ENCODE measurements at regions of chr5 and their contacts with region 1.

Region 1: DNA sequence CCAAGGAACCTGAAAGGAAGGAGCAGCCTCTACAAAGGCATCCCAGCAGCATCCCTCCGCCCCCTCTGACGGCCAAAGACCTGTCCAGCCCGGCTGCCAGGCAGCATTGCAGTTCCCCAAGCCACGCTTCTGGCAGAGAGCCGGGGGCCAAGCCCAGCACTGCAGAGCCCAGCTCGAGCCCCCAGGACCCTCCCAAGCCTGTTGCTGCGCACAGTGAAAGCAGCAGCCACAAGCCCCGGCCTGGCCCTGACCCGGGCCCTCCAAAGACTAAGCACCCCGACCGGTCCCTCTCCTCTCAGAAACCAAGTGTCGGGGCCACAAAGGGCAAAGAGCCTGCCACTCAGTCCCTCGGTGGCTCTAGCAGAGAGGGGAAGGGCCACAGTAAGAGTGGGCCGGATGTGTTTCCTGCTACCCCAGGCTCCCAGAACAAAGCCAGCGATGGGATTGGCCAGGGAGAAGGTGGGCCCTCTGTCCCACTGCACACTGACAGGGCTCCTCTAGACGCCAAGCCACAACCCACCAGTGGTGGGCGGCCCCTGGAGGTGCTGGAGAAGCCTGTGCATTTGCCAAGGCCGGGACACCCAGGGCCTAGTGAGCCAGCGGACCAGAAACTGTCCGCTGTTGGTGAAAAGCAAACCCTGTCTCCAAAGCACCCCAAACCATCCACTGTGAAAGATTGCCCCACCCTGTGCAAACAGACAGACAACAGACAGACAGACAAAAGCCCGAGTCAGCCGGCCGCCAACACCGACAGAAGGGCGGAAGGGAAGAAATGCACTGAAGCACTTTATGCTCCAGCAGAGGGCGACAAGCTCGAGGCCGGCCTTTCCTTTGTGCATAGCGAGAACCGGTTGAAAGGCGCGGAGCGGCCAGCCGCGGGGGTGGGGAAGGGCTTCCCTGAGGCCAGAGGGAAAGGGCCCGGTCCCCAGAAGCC is 30.8 kb downstream of the CD180 start:
- DNase-seq: peak; percentile 86 to 90
- ATAC-seq: peak; percentile 56 to 93 (median 82)
- H3K4me3 ChIP-seq: peak overlapping the region; percentile 46
- H3K27ac ChIP-seq: peak overlapping the region; percentile 61
- H3K4me1 ChIP-seq: no peaks in the 10 kb centered on the region
- H3K27me3 ChIP-seq: no peaks in the 10 kb centered on the region
- CTCF ChIP-seq: peak; percentile 52

Region 2: DNA sequence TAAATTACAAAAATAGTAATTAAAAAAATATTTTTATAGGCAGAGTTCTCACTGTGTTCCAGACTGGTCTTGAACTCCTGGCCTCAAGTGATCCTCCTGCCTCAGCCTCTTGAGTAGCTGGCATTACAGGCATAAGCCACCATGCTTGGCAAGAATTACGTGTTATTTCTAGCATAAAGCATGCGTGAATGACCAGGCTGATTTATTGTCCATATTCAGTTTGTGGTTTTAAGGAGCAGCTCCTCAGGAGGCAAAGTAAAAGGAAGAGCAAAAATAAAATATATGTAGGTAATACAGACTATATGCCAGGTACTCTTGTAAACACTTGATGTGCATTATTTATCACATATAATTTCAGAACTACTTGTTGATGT is 37.9 kb after region 1 on chr5:
- intact Hi-C with region 1: loop called (anchors 2 kb)
- DNase-seq: no peak
- ATAC-seq: no peak
- H3K4me3 ChIP-seq: no peak overlapping the region
- H3K27ac ChIP-seq: no peak overlapping the region
- H3K4me1 ChIP-seq: no peaks in the 10 kb centered on the region
- H3K27me3 ChIP-seq: no peaks in the 10 kb centered on the region
- CTCF ChIP-seq: no peak